PC-3 (cell line): ENCODE measurements at regions of chr5 and their contacts with region 1.

Region 1: DNA sequence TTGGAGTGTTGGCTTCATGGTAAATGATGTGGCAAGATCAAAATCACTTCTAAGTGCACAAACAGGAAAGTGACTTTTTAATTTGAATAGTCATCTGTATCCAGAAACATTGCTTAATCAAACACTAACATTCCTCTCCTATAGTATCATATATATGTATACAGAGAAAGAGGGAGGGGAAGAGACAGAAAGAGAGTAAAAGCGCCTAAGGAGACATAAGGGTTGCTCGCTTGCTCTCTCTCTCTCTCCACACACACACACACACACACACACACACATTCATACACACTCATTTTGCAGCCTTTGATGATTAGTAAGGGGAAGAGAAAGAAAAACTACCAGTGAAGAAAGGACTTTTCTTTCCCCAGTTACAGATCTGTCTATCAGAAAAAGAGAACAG is 95.4 kb upstream of the PRDM9 start:
- DNase-seq: peak; percentile 90
- ATAC-seq: peak; percentile 93
- H3K4me3 ChIP-seq: peak overlapping the region; percentile 56
- H3K27ac ChIP-seq: peak overlapping the region; percentile 90
- H3K4me1 ChIP-seq: peaks cover 33% of the 10 kb centered on the region
- H3K27me3 ChIP-seq: no peaks in the 10 kb centered on the region
- CTCF ChIP-seq: no peak

Region 2: DNA sequence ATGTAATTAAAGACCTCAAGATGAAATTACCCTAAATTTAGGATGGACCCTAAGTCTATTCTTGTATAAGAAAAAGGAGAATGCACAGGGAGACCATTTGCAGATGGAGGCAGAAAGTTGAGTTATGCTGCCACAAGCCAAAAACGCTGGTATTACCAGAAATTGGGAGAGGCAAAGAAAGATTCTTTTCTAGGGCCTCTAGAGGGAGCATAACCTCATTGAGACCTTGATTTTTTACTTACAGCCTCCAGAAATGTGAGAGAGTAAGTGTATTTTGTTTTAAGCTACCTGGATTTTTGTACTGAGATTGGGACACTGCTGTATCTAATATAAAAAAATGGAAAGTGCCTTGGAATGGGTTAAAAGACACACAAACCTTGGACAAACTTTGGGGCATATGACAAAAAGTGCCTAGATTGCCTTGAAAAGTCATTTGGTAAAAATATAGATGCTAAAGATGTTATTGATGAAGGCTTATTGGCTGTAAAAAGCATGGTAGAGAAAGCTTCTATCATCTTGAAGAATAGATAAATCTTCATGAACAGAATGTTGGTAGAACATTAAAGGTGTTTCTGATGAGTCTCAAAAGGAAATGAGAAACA is 79.3 kb before region 1 on chr5:
- CTCF ChIA-PET with region 1: no interaction called
- POLR2A ChIA-PET with region 1: no interaction called
- intact Hi-C with region 1: loop called (anchors 1 kb)
- DNase-seq: peak; percentile 72
- ATAC-seq: peak; percentile 64
- H3K4me3 ChIP-seq: no peak overlapping the region
- H3K27ac ChIP-seq: no peak overlapping the region
- H3K4me1 ChIP-seq: peaks cover 9% of the 10 kb centered on the region
- H3K27me3 ChIP-seq: no peaks in the 10 kb centered on the region
- CTCF ChIP-seq: peak; percentile 83

Region 3: GRCh38 chr5:23367874-23368273 is 44.2 kb before region 1 on chr5:
- CTCF ChIA-PET with region 1: no interaction called
- POLR2A ChIA-PET with region 1: no interaction called
- intact Hi-C with region 1: loop called (anchors 5 kb)
- DNase-seq: no peak
- ATAC-seq: peak; percentile 13; the same call in 1 of the 2 replicates
- H3K4me3 ChIP-seq: no peak overlapping the region
- H3K27ac ChIP-seq: no peak overlapping the region
- H3K4me1 ChIP-seq: peaks cover 8% of the 10 kb centered on the region; the same call in 1 of the 2 replicates
- H3K27me3 ChIP-seq: no peaks in the 10 kb centered on the region
- CTCF ChIP-seq: no peak

Region 4: GRCh38 chr5:23484096-23484495 is 72.1 kb after region 1 on chr5:
- CTCF ChIA-PET with region 1: no interaction called
- POLR2A ChIA-PET with region 1: no interaction called
- intact Hi-C with region 1: loop called (anchors 5 kb)
- DNase-seq: peak; percentile 84
- ATAC-seq: peak; percentile 92
- H3K4me3 ChIP-seq: no peak overlapping the region
- H3K27ac ChIP-seq: peak overlapping the region; percentile 85
- H3K4me1 ChIP-seq: peaks cover 26% of the 10 kb centered on the region
- H3K27me3 ChIP-seq: no peaks in the 10 kb centered on the region
- CTCF ChIP-seq: no peak

Region 5: DNA sequence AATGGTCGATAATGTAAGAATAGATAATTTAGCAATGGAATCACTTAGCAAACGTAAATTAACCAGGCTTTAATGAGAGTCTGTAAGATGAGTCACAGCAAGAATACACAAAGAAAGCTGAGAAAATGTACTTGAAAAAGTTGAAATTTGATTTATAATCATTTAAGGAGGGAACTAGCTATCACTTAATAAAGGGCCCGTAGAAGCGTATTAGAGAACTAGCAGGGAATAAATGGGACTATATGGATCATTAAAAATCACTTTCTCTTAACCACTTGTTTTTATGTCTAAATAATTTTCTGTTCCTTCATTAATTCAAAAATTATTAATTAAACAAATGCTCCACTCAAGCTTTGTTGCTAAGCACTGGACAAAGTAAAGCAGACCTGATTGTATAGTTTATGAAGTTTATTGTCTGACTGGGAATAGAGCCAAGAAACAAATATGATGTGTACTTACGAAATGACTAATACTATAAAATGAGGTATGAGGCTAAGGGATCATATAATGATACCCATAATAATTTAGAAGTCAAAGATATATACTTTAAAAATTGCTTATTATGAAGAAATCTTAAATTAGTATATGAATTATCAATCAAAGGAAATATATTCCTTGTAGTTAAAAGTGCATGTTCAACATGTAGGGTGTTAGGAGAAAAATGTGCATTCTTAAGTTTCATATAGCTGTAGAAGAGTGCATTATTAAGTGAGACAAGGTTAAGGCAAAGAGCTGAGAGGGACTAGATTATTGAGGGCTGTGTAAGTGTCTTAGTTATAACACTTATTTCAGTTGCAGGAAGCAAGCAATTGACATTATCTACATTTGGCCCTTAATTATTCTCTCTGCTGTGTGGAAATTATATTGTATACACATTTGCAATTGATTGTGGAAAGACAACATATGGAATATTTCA is 292.2 kb after region 1 on chr5:
- CTCF ChIA-PET with region 1: no interaction called
- POLR2A ChIA-PET with region 1: no interaction called
- intact Hi-C with region 1: no loop called
- DNase-seq: peak; percentile 92
- ATAC-seq: peak; percentile 96
- H3K4me3 ChIP-seq: peak overlapping the region; percentile 45
- H3K27ac ChIP-seq: peak overlapping the region; percentile 76
- H3K4me1 ChIP-seq: peaks cover 16% of the 10 kb centered on the region
- H3K27me3 ChIP-seq: no peaks in the 10 kb centered on the region
- CTCF ChIP-seq: no peak